Aorta (tissue), 5 donors: ENCODE measurements at regions of chr16 and their contacts with region 1.

Region 1: DNA sequence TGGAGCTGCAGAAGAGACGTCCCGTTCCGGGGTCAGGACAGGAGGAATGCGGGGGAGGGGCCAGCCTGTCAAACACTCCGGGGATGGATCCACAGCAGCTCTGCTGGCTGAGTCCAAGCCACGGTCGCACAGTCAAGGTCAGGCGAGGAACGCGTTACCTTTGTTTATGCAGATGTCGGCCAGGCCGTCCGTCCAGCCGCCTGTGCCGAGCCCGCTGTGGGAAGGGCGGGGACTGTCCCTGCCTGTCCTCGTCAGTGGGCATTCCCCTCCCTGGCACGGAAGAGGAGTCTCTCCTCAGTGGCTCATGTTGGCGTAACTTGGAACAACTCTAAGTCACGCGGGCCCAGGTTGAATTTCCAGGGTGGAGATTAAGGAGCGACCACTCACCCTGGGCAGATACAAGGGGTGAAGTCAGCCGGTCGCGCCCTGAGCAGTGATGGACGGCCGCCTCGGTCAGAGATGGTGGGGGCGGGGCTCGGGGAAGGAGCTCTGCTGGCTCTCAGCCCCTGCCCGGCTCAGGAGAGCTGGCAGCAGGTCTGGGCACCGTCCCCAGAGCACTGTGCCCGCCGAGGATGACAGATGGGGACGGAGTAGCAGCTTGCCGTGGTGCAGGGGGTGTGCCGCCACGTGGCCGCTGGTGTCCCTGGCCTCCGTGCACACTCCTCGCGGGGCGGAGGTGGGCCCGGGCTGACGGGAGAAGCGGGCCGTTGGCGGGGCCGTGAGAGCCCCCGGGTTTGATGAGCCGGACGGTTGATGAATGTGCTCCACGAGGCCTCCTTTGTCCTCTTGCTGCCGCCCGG is 7.3 kb downstream of the CACNA1H start:
- DNase-seq: no peak
- ATAC-seq: peak; percentile 45
- H3K4me3 ChIP-seq: no peak overlapping the region
- H3K27ac ChIP-seq: no peak overlapping the region
- H3K4me1 ChIP-seq: no peaks in the 10 kb centered on the region
- H3K27me3 ChIP-seq: no peaks in the 10 kb centered on the region

Region 2: GRCh38 chr16:700684-701584 is 459.2 kb before region 1 on chr16:
- intact Hi-C with region 1: no loop called
- DNase-seq: no peak
- ATAC-seq: peak; percentile 51
- H3K4me3 ChIP-seq: no peak overlapping the region
- H3K27ac ChIP-seq: no peak overlapping the region
- H3K4me1 ChIP-seq: no peaks in the 10 kb centered on the region
- H3K27me3 ChIP-seq: no peaks in the 10 kb centered on the region

Region 3: DNA sequence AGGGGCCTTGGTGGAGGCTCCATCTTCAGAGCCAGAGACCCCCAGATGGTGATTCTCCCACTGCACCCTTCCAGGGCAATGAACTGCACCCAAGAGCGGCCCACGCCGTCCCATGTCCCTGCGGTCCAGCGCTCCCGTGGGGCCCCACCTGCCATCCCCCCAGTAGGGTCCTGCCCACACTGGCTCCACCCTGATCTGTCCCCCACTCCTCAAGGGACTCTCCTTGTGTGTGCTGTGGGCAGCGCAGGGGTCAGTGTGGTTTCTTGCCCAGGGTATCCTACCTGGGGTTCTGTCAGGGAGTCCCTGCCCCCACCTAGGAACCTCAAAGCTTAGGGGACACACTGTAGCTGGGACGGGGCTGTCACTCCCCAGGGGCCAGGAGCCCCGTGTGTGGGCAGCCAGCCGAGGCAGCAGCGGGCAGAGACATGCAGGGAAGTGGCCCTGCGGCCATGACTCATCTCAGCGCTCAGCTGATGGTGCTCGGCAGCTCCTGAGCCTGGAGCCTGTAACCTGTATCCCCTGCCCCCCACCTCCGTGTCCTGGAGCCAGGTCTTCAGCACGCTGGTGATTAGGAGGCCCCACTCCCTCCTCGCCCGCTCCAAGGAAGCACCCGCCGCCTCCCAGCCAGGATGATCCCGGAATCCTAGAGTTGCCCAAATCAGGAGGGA is 123.3 kb before region 1 on chr16:
- intact Hi-C with region 1: no loop called
- DNase-seq: no peak
- ATAC-seq: no peak
- H3K4me3 ChIP-seq: no peak overlapping the region
- H3K27ac ChIP-seq: no peak overlapping the region
- H3K4me1 ChIP-seq: no peaks in the 10 kb centered on the region
- H3K27me3 ChIP-seq: no peaks in the 10 kb centered on the region

Region 4: GRCh38 chr16:1054660-1055556 is 105.3 kb before region 1 on chr16:
- intact Hi-C with region 1: no loop called
- DNase-seq: peak; percentile 73 to 91
- ATAC-seq: peak; percentile 70
- H3K4me3 ChIP-seq: no peak overlapping the region
- H3K27ac ChIP-seq: no peak overlapping the region
- H3K4me1 ChIP-seq: no peaks in the 10 kb centered on the region
- H3K27me3 ChIP-seq: no peaks in the 10 kb centered on the region

Region 5: DNA sequence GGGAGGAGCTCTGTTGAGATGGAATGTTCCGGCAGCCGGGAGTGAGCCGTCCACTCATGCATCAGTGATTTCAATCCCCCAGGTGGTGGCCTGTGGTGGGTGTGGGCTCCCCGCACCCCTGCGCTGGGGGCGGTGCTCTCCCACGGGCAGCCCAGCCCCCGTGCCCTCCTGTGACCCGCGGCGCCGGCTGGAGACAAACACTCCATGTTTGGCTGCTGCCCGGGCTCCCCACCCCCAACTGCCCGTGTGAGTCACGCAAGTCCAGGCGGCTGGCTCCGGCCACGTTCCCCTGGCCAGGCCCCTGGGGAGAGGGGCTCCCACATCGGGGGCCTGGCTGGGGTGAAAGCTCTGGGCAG is 22.1 kb after region 1 on chr16:
- intact Hi-C with region 1: loop called in 1 of 2 experiments (anchors 2 kb)
- DNase-seq: peak; percentile 92 to 95
- ATAC-seq: peak; percentile 75
- H3K4me3 ChIP-seq: no peak overlapping the region
- H3K27ac ChIP-seq: peak overlapping the region in 1 of 2 donors; percentile 39
- H3K4me1 ChIP-seq: no peaks in the 10 kb centered on the region
- H3K27me3 ChIP-seq: no peaks in the 10 kb centered on the region